GM13977 (cell line): ENCODE measurements at regions of chr15 and their contacts with region 1.

Region 1: DNA sequence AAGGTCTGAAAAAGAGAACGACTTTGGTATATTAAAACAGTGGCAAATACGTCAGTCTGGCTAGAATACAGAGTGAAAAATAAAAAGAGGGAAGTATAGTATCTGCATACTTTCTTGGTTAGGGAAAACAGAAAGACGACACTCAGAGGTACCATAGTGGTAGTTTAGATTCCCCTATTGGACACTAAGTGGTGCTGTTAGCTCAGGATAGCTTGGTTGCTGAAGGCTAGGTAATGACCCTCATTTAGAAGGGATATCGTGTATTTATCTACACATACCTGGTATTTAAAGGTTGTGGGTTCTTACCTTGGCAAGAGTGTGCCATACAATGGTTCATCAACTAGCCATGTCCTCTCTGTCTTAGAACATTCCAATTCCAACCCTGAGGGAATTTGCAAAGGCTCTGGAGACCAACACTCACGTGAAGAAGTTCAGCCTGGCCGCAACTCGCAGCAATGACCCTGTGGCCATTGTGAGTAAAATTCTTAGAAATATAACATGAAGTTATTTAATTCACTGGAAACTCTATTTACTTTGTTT is 31.0 kb downstream of the TMOD2 start:
- DNase-seq: no peak
- CTCF ChIP-seq: no peak

Region 2: DNA sequence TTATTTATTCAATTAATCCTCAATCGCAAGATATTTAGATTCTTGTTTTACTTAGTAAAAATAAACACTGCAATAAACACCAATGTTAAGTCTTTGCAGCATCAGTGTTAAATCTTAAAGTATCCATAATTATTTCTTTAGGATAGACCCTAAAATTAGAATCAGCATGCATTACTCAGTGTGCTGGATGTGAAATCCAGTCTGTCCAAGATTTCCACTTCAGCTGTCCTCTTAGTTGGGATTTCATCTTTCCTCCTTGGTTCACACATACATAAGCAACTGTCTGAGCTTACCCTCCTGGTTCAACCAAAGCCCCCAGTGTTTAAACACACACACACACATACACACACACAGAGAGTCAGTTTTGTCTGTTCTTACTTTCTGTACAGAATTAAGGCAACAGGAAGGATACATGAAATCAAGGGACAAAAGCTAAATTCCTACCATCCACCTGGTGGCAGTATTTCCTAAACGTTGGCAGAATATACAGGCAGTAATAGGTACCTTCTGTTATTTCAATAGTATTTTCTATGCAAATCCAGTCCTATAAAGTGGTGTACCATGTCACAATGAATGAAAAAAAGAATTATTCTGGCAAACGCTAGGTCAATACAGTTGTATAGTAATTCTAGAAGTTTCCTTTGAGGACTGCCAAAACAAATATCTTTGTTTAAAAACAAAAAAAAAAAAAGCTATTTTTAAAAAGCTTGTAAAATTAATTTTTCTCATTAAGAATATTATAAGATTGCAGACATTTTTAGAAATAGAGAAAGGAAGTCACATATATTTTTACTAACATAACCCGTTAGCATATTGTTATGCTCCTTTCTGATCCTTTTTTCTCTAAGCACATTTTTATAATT is 132.5 kb before region 1 on chr15:
- in situ Hi-C with region 1: loop called (anchors 5 kb)
- DNase-seq: peak; percentile 71
- CTCF ChIP-seq: peak; percentile 72

Region 3: DNA sequence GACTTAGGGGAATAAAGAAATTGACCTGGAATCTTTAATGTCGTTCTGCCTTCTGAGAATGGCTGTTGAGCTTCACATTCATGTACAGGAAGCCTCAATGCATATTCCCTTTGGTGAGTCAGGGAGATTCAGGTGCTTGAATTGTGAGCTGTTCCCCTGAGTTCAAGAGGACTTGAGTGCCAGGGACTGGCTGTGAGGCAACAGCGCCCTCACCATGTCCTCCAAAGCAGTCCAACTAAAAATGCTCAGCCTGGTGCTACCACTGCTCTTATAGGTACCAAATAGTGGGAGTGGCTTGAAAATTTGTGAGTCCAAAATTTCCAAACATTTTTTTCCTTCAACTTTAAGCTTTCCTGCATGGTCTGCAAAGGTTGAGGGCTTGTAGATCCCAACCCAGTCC is 135.1 kb after region 1 on chr15:
- in situ Hi-C with region 1: no loop called
- DNase-seq: no peak
- CTCF ChIP-seq: peak; percentile 35

Region 4: DNA sequence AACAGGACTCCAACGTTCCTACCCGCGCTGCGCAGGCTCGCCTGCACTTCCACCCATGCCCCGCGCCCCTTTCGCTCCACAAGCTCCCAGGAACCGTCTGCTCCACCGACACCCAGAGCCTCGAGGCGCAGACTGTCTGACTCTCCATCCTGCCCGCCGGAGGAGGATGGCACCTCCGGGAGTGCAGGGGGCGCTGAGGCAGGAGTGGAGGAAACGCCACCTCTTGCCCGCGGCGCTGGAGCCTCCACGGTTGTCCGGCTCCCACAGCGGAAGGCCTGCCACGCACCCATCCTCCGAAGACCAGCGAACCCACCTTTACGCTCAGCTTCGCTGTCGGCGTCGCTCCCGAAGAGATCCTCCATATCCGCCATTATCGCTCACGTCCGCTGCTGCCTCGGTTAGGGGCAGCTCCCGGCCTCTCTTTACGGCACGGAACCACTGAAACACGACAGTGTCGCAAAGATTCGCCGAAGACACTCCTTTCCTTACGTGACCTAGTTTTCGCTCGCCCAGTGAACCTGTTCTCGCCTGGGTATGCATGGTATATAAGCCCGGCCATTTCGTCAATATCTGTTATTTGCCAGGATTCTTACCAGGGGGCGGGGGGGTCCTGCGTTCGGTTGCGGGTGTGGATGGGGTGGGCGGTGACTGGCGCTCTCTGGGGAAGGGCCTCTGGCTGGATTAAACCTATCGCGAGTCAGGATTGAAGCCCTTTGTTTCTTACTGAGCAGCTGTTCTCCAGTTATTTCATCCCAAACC is 189.1 kb after region 1 on chr15 and contains the start of gene LEO1:
- in situ Hi-C with region 1: no loop called
- DNase-seq: peak; percentile 91
- CTCF ChIP-seq: peak; percentile 45